ENCODE measurements at regions of chr5 and their contacts with region 1.

Region 1: GRCh38 chr5:74648835-74649293 is 8.3 kb upstream of the ENC1 start:
- DNase-seq: no peak
- ATAC-seq: peak; percentile 75 to 93 (median 90)
- H3K4me3 ChIP-seq: peak overlapping the region in 1 of 10 donors; percentile 25
- H3K27ac ChIP-seq: no peak overlapping the region
- H3K4me1 ChIP-seq: peaks cover 0 to 17% (median 7%) of the 10 kb centered on the region in 9 donors
- H3K27me3 ChIP-seq: no peaks in the 10 kb centered on the region
- CTCF ChIP-seq: peak; percentile 54 to 88 (median 77)

Region 2: DNA sequence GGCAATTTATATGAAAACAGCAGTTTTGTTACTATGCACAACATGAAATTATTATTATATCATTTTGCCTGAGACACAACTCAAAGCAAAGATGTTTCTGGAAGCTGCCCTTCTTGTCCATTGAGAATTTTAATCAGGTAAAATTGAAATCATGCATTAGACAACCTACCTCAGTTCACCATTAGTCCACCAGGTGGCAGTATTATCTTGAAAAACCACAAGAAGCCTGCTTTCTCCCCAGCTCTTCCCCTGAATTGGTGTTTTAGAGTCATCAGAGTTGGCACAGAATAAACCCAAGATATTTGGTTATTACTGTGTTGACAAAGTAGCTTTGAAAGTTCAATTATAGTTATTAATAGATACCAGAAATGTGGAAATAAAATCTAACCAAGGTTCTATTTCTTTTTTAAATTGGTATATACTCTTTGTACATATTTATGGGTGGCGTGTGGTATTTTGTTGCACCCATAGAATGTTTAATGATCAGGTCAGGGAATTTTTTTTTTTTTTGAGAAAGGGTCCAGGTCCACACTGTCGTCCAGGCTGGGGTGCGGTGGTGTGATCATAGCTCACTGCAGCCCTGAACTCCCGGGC is 1057.7 kb before region 1 on chr5:
- intact Hi-C with region 1: loop called in 5 of 10 experiments (anchors 5 to 10 kb)
- DNase-seq: peak in 1 of 2 donors; percentile 68
- ATAC-seq: peak in 6 of 8 donors; percentile 65 to 81 (median 73)
- H3K4me3 ChIP-seq: no peak overlapping the region
- H3K27ac ChIP-seq: no peak overlapping the region
- H3K4me1 ChIP-seq: no peaks in the 10 kb centered on the region
- H3K27me3 ChIP-seq: no peaks in the 10 kb centered on the region
- CTCF ChIP-seq: peak; percentile 74 to 91 (median 86)

Region 3: DNA sequence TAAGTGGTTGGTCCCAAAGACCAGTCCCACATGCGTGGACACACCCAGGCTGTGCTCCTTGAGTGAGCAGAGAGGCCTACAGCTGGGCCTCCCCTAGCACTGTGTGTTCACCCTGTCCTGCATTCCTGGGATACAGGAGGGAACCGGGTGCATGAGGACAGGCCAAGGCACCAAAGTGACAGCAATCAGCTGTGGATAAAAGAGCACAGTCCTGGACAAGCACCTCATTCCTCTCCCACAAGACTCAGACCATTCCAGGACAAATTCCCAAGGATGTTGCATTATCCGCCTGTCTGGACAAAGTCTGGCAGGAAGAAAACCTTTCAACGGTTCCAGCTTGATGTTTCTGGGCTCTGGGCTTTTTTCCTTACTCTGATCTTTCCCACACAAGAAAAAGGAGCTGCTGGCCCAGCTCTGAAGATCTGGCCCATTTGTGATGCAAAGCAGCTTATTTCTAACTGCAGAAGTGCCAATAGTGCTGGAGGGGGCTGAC is 281.6 kb before region 1 on chr5:
- intact Hi-C with region 1: no loop called
- DNase-seq: no peak
- ATAC-seq: peak; percentile 40 to 86 (median 66)
- H3K4me3 ChIP-seq: no peak overlapping the region
- H3K27ac ChIP-seq: peak overlapping the region in 8 of 10 donors; percentile 14 to 79 (median 54)
- H3K4me1 ChIP-seq: peaks cover 0 to 45% (median 7%) of the 10 kb centered on the region in 9 donors
- H3K27me3 ChIP-seq: no peaks in the 10 kb centered on the region
- CTCF ChIP-seq: no peak

Region 4: DNA sequence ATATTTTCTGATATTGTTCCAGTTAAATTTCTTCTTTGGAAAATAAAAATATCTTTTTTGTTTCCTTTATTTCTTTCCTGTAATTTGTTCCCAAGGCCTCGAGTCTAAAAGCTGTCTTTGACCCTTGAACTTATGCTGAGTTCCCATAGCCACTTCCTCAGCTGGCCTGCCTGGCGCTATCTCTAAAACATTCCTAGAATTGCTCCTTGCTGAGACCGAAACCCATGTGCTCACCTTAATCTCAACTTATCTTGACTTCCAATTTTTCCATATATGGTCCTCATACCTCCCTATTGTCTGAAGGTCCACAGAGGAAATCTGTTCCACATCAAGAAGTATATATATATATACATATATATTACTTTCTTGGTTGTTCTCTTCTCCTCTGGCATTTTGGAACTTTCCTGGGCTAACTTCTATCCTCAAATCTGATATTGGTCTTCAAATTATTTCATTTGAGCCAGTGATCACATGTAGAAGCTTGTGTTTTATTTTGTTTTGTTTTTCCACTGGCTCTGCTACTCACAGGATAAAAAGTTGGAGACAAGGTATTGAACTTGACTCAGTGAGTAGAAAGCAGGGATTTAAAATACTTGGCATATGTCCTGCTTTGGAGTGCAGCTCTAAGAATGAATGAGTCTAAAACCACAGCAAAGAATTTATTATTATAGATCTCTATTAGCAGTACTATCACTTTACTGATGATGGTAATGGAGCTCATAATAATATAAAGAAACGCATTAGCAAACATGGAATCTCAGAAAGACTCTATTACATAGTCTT is 53.5 kb before region 1 on chr5:
- intact Hi-C with region 1: no loop called
- DNase-seq: peak in 1 of 2 donors; percentile 15
- ATAC-seq: peak in 4 of 8 donors; percentile 62 to 85 (median 64)
- H3K4me3 ChIP-seq: no peak overlapping the region
- H3K27ac ChIP-seq: peak overlapping the region in 6 of 10 donors; percentile 1 to 36 (median 22)
- H3K4me1 ChIP-seq: peaks cover 0 to 25% (median 13%) of the 10 kb centered on the region in 9 donors
- H3K27me3 ChIP-seq: no peaks in the 10 kb centered on the region
- CTCF ChIP-seq: no peak

Region 5: GRCh38 chr5:75558981-75559632 is 910.2 kb after region 1 on chr5:
- intact Hi-C with region 1: no loop called
- DNase-seq: no peak
- ATAC-seq: peak in 6 of 8 donors; percentile 42 to 83 (median 70)
- H3K4me3 ChIP-seq: no peak overlapping the region
- H3K27ac ChIP-seq: peak overlapping the region in 9 of 10 donors; percentile 22 to 81 (median 62)
- H3K4me1 ChIP-seq: peaks cover 0 to 24% (median 9%) of the 10 kb centered on the region in 9 donors
- H3K27me3 ChIP-seq: no peaks in the 10 kb centered on the region
- CTCF ChIP-seq: no peak